Posterior cingulate gyrus (tissue), 11 donors: ENCODE measurements at regions of chr3 and their contacts with region 1.

Region 1: DNA sequence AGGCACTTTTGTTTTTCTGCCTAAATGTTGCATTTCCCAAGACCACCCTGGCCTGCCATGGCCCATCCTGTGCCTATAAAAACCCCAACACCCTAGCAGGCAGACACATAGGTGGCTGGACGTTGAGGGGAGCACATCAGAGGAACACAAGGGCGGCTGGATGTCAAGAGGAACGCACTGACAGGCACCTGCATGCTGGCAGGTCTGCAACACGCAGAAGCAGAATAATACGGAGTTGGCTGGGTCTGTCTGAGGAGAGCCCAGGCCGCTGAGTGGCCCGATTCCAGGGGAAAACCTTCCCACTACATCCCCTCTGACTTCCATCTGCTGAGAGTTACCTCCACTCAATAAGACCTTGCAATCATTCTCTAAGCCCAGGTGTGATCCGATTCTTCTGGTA is 765.6 kb downstream of the PLOD2 start:
- DNase-seq: peak in 1 of 10 donors; percentile 55

Region 2: GRCh38 chr3:144556392-144556791 is 839.0 kb before region 1 on chr3:
- intact Hi-C with region 1: loop called (anchors 5 kb)
- DNase-seq: no peak

Region 3: DNA sequence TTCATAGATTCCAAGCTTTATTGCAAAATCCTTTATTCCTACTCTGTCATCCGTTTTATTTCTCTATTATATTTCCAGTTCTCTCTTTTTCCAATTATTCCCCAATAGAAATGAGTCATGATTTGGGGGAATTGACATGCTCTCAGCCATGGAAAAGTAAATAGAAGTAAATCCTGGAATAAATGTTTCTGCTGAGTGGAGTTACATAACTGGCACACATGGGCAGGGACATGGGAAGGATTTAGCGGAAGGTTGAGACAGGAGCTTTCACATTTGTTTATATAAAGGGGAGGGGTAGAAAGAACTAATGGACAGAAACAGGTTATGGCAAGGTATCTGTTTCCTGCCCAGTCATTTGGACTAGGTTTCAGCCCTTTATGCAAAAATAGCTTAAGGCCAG is 544.0 kb after region 1 on chr3:
- intact Hi-C with region 1: no loop called
- DNase-seq: no peak